HEK293T (cell line): ENCODE measurements at regions of chr18 and their contacts with region 1.

Region 1: GRCh38 chr18:43587538-43588153 is 310.4 kb upstream of the SYT4 start:
- DNase-seq: peak; percentile 19

Region 2: GRCh38 chr18:43571078-43571689 is 16.5 kb before region 1 on chr18:
- CTCF ChIA-PET with region 1: interaction called, 13 read pairs
- POLR2A ChIA-PET with region 1: no interaction called
- DNase-seq: peak; percentile 10